PC-3 (cell line): ENCODE measurements at regions of chr4 and their contacts with region 1.

Region 1: DNA sequence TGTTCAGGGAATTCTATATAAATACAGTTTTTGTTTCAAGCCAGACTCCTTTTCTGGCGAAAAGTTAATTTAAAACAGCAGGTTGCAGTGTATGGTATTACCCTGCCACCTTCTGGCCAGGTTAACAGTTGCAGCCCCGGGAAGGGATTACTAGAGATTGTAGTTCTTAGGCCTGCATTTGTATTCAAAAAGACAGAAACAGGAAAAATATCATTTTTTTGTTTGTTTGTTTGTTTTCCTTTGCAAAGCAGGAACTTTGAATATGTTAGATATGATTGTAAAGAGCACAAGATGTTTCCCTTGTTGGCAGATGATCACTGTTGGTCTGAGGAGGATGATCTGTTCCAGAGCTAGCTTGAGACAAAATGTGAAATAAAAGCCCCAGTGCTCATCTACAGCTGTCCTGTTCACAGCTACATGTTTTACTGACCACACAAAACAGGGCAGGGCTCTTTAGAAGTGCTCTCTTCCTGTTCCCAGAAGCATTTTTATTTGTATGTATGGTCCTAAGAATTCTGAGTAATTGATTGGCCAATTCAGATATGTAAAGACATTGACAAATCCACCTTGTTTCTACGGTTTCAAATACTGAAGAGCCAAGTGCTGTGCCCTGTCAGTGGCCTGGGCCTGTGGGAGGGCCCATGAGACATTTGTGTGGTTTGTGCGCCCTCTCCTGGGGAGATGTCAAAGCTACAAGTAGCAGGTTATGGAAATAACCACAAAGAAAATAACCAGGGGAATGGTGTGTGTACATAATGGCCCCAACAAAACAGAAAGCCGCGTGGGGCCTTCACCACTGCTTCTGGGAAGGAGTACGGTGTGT is 57.9 kb downstream of the CLDN22 start:
- DNase-seq: peak; percentile 67
- ATAC-seq: peak; percentile 73
- H3K4me3 ChIP-seq: no peak overlapping the region
- H3K27ac ChIP-seq: peak overlapping the region; percentile 17; the same call in 1 of the 2 replicates
- H3K4me1 ChIP-seq: peaks cover 20% of the 10 kb centered on the region
- H3K27me3 ChIP-seq: no peaks in the 10 kb centered on the region
- CTCF ChIP-seq: peak; percentile 74

Region 2: DNA sequence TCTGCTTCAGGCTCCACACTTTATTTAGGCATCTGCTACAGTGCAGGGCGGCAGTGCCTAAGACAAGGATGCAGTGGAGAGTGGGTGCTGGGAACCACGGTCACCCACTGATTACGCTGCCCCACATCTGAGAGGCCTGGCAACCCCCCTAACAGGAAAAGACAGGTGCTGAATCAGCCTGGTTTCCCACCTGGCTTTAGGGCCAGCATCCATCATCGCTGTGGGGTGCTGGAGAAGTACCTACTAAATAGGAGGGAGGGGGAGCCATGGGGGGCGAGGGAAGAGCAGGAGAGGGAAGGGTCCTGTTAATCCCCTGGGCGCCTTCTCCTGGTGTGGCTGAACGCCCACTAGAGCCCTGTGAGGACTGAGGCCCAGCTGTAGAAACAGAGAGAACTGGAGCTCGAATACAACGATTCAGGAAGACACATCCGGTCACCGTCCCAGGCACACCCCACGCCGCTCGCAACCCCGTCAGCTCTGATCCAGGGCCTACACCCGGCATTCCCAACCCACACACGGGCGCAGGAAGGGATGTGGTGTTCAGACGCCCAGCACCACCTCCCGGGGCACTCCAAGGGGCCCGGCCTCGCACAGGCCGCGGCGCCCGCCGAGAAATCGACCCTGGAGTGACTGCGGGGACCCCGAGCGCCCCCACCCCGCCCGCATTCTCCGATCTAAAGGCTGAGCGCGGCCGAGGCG is 345.5 kb before region 1 on chr4:
- CTCF ChIA-PET with region 1: interaction called, 15 read pairs
- POLR2A ChIA-PET with region 1: no interaction called
- intact Hi-C with region 1: no loop called
- DNase-seq: peak; percentile 38
- ATAC-seq: peak; percentile 56
- H3K4me3 ChIP-seq: peak overlapping the region; percentile 73
- H3K27ac ChIP-seq: no peak overlapping the region
- H3K4me1 ChIP-seq: peaks cover 18% of the 10 kb centered on the region
- H3K27me3 ChIP-seq: no peaks in the 10 kb centered on the region
- CTCF ChIP-seq: no peak

Region 3: DNA sequence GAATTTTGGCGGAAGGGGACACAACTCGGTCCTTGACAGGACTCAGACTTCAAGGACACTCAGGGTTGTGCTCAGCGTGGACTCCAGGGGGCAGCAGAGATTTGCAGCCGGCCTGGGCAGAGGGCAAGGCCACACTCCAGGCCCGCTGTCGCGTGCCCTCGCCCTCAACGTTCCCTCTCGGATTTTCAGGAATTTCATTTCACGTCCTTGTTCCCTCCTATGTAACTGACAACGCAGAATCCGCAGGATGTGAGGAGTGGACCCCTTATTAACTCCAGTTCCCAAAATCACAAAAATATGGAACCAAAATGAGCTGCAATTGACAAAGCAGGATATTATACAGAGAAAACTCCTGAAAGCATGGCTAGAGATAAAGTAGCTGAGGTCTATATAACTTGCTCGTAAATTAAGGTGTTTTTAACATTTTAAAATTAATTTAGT is 323.9 kb before region 1 on chr4:
- CTCF ChIA-PET with region 1: interaction called, 4 read pairs
- POLR2A ChIA-PET with region 1: no interaction called
- intact Hi-C with region 1: loop called (anchors 1 kb)
- DNase-seq: peak; percentile 75
- ATAC-seq: peak; percentile 100
- H3K4me3 ChIP-seq: no peak overlapping the region
- H3K27ac ChIP-seq: no peak overlapping the region
- H3K4me1 ChIP-seq: no peaks in the 10 kb centered on the region
- H3K27me3 ChIP-seq: no peaks in the 10 kb centered on the region
- CTCF ChIP-seq: peak; percentile 86

Region 4: GRCh38 chr4:183074296-183074990 is 187.7 kb before region 1 on chr4:
- CTCF ChIA-PET with region 1: no interaction called
- POLR2A ChIA-PET with region 1: no interaction called
- intact Hi-C with region 1: loop called (anchors 1 kb)
- DNase-seq: no peak
- ATAC-seq: no peak
- H3K4me3 ChIP-seq: no peak overlapping the region
- H3K27ac ChIP-seq: no peak overlapping the region
- H3K4me1 ChIP-seq: no peaks in the 10 kb centered on the region
- H3K27me3 ChIP-seq: no peaks in the 10 kb centered on the region
- CTCF ChIP-seq: no peak

Region 5: GRCh38 chr4:183241322-183241640 is 20.9 kb before region 1 on chr4:
- CTCF ChIA-PET with region 1: interaction called, 20 read pairs
- POLR2A ChIA-PET with region 1: no interaction called
- intact Hi-C with region 1: no loop called
- DNase-seq: peak; percentile 86
- ATAC-seq: peak; percentile 88
- H3K4me3 ChIP-seq: no peak overlapping the region
- H3K27ac ChIP-seq: peak overlapping the region; percentile 60
- H3K4me1 ChIP-seq: peaks cover 35% of the 10 kb centered on the region
- H3K27me3 ChIP-seq: no peaks in the 10 kb centered on the region
- CTCF ChIP-seq: no peak

Region 6: DNA sequence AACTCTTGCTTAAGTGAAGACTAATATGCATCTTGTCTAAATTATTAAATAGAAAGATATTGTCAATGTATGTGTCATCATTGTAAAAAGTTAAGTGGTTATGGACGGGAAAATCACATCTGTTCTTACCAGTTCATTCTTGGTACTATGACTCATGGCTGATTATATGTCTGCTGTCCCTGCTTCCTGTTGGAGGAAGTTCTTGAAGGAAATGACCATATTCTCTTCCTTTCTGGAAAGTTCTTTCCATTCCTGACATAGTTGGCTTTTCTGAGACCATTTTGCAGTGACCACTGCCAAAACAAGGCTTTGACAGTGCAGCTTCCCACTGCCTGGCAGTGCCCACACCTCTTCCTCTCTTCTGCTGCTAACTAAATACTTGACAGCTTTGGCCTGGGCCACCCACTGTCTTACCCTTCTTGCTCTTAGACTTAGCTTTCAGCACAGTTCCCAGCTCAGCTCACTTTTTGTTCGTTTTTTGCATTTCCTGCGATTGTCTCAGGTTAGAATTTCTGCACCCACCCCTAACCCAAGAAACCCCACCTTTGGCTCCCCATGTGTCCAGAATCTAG is 73.3 kb after region 1 on chr4:
- CTCF ChIA-PET with region 1: no interaction called
- POLR2A ChIA-PET with region 1: no interaction called
- intact Hi-C with region 1: loop called (anchors 2 kb)
- DNase-seq: peak; percentile 88
- ATAC-seq: peak; percentile 67
- H3K4me3 ChIP-seq: no peak overlapping the region
- H3K27ac ChIP-seq: peak overlapping the region; percentile 96
- H3K4me1 ChIP-seq: peaks cover 26% of the 10 kb centered on the region
- H3K27me3 ChIP-seq: no peaks in the 10 kb centered on the region
- CTCF ChIP-seq: no peak

Region 7: DNA sequence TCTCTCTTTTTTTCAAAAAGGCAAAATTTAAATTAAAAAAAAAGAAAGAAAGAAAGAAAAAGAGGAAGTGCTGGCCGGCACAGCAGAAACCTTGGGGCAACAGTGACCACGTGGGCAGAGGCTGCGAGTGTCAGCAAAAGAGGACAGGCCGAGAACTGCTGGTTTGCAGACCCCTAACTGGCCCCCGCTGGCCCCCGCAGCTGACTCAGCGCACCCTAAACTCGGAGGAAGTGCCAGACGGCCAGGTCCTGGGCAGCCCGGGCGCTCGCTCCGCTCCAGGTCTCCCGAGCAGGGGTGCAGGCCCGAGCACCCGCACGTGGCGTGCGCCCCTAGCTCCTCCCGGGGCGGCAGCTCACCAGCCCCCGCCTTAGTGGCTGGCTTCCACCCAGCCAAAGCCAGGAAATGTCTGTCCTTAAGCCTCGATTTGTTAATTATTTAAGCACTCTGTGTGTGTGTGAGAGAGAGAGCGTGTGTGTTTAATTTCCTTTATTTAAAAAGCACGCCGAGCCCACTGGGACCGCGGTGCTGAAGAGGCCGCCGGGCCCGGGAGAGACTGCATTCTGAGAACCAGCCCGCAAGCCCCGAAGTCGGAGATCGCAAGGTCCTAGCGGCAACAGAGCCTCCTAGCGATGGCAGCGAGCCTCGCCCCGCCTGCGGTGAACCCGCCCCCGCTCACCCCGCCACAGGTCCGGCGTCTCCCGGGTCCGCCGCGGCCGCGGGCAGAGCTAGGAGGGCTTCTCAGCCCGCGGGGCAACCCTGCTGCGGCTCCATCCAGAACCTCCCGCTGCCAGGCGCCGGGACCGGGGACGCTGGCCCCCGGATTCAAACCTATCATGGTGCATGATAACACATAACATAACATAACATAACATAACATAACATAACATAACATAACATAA is 136.3 kb after region 1 on chr4:
- CTCF ChIA-PET with region 1: no interaction called
- POLR2A ChIA-PET with region 1: no interaction called
- intact Hi-C with region 1: loop called (anchors 2 kb)
- DNase-seq: peak; percentile 68
- ATAC-seq: peak; percentile 90
- H3K4me3 ChIP-seq: peak overlapping the region; percentile 64
- H3K27ac ChIP-seq: no peak overlapping the region
- H3K4me1 ChIP-seq: peaks cover 11% of the 10 kb centered on the region
- H3K27me3 ChIP-seq: no peaks in the 10 kb centered on the region
- CTCF ChIP-seq: peak; percentile 62

Region 8: GRCh38 chr4:184016759-184017668 is 754.9 kb after region 1 on chr4:
- CTCF ChIA-PET with region 1: no interaction called
- POLR2A ChIA-PET with region 1: no interaction called
- intact Hi-C with region 1: no loop called
- DNase-seq: no peak
- ATAC-seq: no peak
- H3K4me3 ChIP-seq: no peak overlapping the region
- H3K27ac ChIP-seq: no peak overlapping the region
- H3K4me1 ChIP-seq: no peaks in the 10 kb centered on the region
- H3K27me3 ChIP-seq: no peaks in the 10 kb centered on the region
- CTCF ChIP-seq: no peak